HepG2 (cell line): ENCODE measurements at regions of chr6 and their contacts with region 1.

Region 1: DNA sequence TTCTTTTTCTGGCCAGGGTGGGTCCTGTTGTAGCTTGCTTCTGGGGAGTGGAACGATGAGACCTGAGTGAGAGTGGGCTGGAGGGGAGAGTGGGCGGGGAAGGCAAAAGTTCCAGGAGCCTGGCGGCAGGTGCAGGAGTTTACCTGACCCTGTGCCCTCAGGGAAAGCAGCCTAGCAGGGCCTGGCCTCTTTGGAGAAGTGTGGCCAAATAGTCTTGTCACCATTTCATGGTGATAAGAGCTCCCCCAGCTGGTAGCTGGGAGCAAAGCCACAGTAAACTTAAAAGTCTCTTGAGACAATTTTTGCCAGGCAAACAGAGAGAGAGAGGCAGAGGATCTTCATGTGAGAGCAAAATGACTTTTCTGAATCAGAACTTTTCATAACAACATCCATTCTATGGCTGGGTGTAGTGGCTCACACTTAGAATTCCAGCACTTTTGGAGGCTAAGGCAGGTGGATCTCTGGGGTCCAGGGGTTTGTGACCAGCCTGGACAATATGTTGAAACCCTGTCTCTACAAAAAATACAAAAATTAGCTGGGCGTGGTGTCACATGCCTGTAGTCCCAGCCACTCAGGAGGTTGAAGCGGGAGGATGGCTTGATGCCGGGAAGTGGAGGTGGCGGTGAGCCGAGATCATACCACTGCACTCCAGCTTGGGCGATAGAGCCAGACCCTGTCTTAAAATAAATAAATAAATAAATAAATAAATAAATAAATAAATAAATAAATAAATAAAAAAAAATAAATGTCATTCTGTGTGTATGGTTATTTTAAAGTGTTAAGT is 161.8 kb upstream of the SCGN start:
- DNase-seq: peak; percentile 76
- ATAC-seq: peak; percentile 99
- H3K4me3 ChIP-seq: no peak overlapping the region
- H3K27ac ChIP-seq: no peak overlapping the region
- H3K4me1 ChIP-seq: no peaks in the 10 kb centered on the region
- H3K27me3 ChIP-seq: no peaks in the 10 kb centered on the region
- CTCF ChIP-seq: peak; percentile 92
- EP300 ChIP-seq: no peak
- POLR2A ChIP-seq: no peak
- RAD21 ChIP-seq: peak; percentile 80

Region 2: GRCh38 chr6:25223490-25223991 is 266.7 kb before region 1 on chr6:
- CTCF ChIA-PET with region 1: interaction called, 25 read pairs
- POLR2A ChIA-PET with region 1: no interaction called
- in situ Hi-C with region 1: no loop called
- intact Hi-C with region 1: loop called (anchors 1 kb)
- DNase-seq: peak; percentile 54
- ATAC-seq: peak; percentile 73
- H3K4me3 ChIP-seq: no peak overlapping the region
- H3K27ac ChIP-seq: no peak overlapping the region
- H3K4me1 ChIP-seq: no peaks in the 10 kb centered on the region
- H3K27me3 ChIP-seq: 0 out of 5 replicates have a peak, but pooled peaks cover 0 to 4% of the 10 kb centered on the region in 2 experiments
- CTCF ChIP-seq: peak; percentile 84
- EP300 ChIP-seq: no peak
- POLR2A ChIP-seq: no peak
- RAD21 ChIP-seq: peak; percentile 57; the same call in 1 of the 2 replicates

Region 3: GRCh38 chr6:25263657-25264056 is 226.6 kb before region 1 on chr6:
- CTCF ChIA-PET with region 1: interaction called, 37 read pairs
- POLR2A ChIA-PET with region 1: no interaction called
- in situ Hi-C with region 1: no loop called
- intact Hi-C with region 1: loop called (anchors 1 kb)
- DNase-seq: no peak
- ATAC-seq: no peak
- H3K4me3 ChIP-seq: no peak overlapping the region
- H3K27ac ChIP-seq: no peak overlapping the region
- H3K4me1 ChIP-seq: no peaks in the 10 kb centered on the region
- H3K27me3 ChIP-seq: no peaks in the 10 kb centered on the region
- CTCF ChIP-seq: no peak
- EP300 ChIP-seq: no peak
- POLR2A ChIP-seq: no peak
- RAD21 ChIP-seq: no peak

Region 4: DNA sequence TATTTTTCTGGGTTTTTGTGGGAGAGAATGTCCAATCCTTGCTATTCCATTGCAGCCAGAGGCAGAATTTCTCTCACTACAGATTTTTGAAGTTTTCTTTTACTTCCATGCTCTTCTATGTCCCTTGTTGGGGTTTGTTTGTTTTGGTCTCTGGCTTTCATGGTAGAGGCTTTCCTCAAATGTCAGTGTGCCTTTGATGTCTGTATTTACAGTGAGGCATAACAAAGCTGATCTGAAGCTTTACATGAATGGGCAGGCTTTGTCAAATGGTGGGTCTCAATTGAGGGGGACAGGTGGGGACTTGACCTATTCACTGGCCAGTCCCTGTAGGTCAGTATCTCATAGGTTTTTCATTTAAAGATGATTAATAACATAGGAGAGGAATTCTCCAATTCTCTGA is 219.7 kb before region 1 on chr6:
- CTCF ChIA-PET with region 1: interaction called, 37 read pairs
- POLR2A ChIA-PET with region 1: no interaction called
- in situ Hi-C with region 1: loop called (anchors 5 kb)
- intact Hi-C with region 1: loop called (anchors 1 kb)
- DNase-seq: peak; percentile 65
- ATAC-seq: peak; percentile 73
- H3K4me3 ChIP-seq: no peak overlapping the region
- H3K27ac ChIP-seq: no peak overlapping the region
- H3K4me1 ChIP-seq: peaks cover 18% of the 10 kb centered on the region
- H3K27me3 ChIP-seq: no peaks in the 10 kb centered on the region
- CTCF ChIP-seq: no peak
- EP300 ChIP-seq: peak in 1 of 2 experiments; percentile 70; a peak in 2 of 4 replicates
- POLR2A ChIP-seq: no peak
- RAD21 ChIP-seq: no peak

Region 5: DNA sequence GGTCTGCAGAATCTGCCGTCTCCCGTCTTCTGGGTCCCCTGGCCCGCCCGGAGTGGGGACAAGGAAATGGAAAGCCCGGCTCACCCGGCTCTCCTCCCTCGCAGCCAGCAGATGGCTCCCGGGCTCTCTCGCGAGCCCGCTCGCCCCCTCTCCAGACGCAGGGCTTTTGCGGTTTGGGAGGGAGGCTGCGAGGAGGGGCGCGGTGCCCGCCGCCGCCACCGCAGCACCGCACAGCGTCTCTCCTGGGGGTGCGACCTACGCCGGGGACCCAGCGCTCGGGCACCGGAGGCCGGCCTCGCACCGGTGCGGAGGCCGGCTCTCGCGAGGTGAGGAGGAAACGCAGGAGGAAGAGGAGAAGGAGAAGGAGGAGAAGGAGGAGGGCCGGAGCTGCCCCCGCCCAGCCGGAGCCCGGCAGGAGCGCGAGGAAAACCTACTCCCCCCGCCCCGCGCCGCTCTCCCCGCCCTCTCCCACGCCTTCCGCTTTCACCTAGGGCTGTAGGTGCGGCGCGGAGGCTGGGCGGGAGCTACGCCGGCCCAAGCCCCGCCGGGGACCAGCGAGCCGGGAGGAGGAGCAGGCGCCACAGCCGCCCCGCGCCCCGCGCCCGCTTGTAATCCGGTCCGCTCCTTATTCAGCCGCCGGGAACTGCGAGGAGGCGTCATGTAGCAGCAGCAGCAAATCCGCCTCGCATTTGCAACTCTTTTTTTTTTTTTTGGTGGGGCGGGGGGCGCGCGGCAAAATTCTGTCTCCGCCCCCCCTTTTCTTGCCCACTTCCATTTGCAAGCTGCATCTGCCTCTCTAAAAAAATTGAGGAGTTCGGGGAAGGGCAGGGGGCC is 211.1 kb before region 1 on chr6 and contains the start of gene CARMIL1:
- CTCF ChIA-PET with region 1: interaction called, 10 read pairs
- POLR2A ChIA-PET with region 1: no interaction called
- in situ Hi-C with region 1: loop called (anchors 5 kb)
- intact Hi-C with region 1: loop called (anchors 1 kb)
- DNase-seq: peak; percentile 54
- ATAC-seq: peak; percentile 92
- H3K4me3 ChIP-seq: peak within 1 kb of the TSS; percentile 67 to 81 (median 79)
- H3K27ac ChIP-seq: no peak within 1 kb of the TSS
- H3K4me1 ChIP-seq: peaks cover 35% of the 10 kb centered on the region
- H3K27me3 ChIP-seq: peaks cover 0 to 21% of the 10 kb centered on the region in 2 experiments; a peak in 3 of 5 replicates
- CTCF ChIP-seq: peak; percentile 86
- EP300 ChIP-seq: no peak
- POLR2A ChIP-seq: no peak
- RAD21 ChIP-seq: peak; percentile 91
- total RNA-seq, gene CARMIL1: 2.6 and 2.9 TPM in 2 replicates